Pancreas (tissue), 10 donors: ENCODE measurements at regions of chr19 and their contacts with region 1.

Region 1: GRCh38 chr19:1568320-1569019 is at the start of gene MEX3D:
- DNase-seq: peak; percentile 57 to 94 (median 84)
- ATAC-seq: peak; percentile 86 to 90 (median 88)
- H3K4me3 ChIP-seq: peak within 1 kb of the TSS; percentile 40 to 67 (median 66)
- H3K27ac ChIP-seq: peak within 1 kb of the TSS; percentile 43 to 83 (median 74)
- H3K4me1 ChIP-seq: peaks cover 0 to 4% (median 4%) of the 10 kb centered on the region in 3 donors
- H3K27me3 ChIP-seq: no peaks in the 10 kb centered on the region
- CTCF ChIP-seq: no peak
- total RNA-seq, gene MEX3D: 8.1 to 21.2 (median 10.3) TPM

Region 2: GRCh38 chr19:1507763-1508509 is 60.5 kb before region 1 on chr19:
- intact Hi-C with region 1: no loop called
- DNase-seq: peak; percentile 88 to 94 (median 91)
- ATAC-seq: peak; percentile 91 to 96 (median 92)
- H3K4me3 ChIP-seq: peak overlapping the region in 3 of 4 donors; percentile 28 to 44 (median 31)
- H3K27ac ChIP-seq: peak overlapping the region in 3 of 4 donors; percentile 3 to 81 (median 61)
- H3K4me1 ChIP-seq: peaks cover 0 to 6% (median 0%) of the 10 kb centered on the region in 3 donors
- H3K27me3 ChIP-seq: no peaks in the 10 kb centered on the region
- CTCF ChIP-seq: no peak

Region 3: DNA sequence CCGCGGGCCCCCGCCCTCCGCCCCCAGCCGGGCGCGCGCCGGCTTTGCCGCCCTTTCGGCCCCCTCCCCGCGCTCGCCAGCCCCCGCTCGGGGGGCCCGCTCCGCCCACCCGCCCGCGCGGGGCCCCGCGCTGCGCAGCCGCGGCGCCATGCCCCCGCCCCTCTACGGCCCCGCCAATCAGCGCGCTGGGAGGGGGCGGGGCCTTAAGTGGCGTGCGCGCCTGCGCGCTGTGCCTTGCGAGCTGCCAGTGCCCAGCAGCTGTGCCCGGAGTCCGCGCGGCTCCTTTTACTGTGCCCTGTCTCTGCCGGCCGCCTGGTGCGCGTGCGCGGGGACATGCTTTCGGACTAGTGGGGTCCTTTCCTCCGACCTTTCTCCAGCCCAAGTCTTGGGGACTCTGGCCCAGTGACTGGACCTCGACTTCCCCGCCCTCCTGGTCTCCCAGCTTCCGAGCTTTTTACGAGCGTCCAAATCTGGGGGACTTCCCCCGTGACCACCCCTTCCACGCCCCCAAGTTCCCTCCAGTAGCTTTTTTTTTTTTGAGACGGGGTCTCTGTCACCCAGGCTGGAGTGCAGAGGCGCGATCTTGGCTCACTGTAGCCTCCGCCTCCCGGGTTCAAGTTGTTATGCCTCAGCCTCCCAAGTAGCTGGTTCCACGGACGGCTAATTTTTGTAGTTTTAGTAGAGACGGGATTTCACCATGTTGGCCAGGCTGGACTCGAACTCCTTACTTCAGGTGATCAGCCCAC is 24.5 kb after region 1 on chr19 and contains the start of gene MBD3:
- intact Hi-C with region 1: no loop called
- DNase-seq: peak; percentile 90 to 99 (median 95)
- ATAC-seq: peak; percentile 90 to 96 (median 92)
- H3K4me3 ChIP-seq: peak within 1 kb of the TSS; percentile 62 to 85 (median 66)
- H3K27ac ChIP-seq: peak within 1 kb of the TSS; percentile 78 to 93 (median 88)
- H3K4me1 ChIP-seq: peaks cover 0 to 13% (median 0%) of the 10 kb centered on the region in 3 donors
- H3K27me3 ChIP-seq: no peaks in the 10 kb centered on the region
- CTCF ChIP-seq: peak in 1 of 4 donors; percentile 12
- total RNA-seq, gene MBD3: 17.4 to 38.2 (median 26.4) TPM

Region 4: GRCh38 chr19:1652471-1653299 is 84.2 kb after region 1 on chr19 and contains the start of gene TCF3:
- intact Hi-C with region 1: loop called in 1 of 3 experiments (anchors 10 kb)
- DNase-seq: peak; percentile 97 to 99 (median 98)
- ATAC-seq: peak; percentile 96 to 99 (median 96)
- H3K4me3 ChIP-seq: peak within 1 kb of the TSS; percentile 58 to 94 (median 90)
- H3K27ac ChIP-seq: peak within 1 kb of the TSS; percentile 99 to 100 (median 99)
- H3K4me1 ChIP-seq: peaks cover 0 to 4% (median 0%) of the 10 kb centered on the region in 3 donors
- H3K27me3 ChIP-seq: no peaks in the 10 kb centered on the region
- CTCF ChIP-seq: no peak
- total RNA-seq, gene TCF3: 19.8 to 41.9 (median 24.8) TPM